Activated CD8-positive, alpha-beta memory T cell treated with anti-CD3 and anti-CD28 coated beads, Interleukin-2, amount 10 ng/mL, durations not matched to agents 7 days and 5 days (primary cell): ENCODE measurements at regions of chr1 and their contacts with region 1.

Region 1: DNA sequence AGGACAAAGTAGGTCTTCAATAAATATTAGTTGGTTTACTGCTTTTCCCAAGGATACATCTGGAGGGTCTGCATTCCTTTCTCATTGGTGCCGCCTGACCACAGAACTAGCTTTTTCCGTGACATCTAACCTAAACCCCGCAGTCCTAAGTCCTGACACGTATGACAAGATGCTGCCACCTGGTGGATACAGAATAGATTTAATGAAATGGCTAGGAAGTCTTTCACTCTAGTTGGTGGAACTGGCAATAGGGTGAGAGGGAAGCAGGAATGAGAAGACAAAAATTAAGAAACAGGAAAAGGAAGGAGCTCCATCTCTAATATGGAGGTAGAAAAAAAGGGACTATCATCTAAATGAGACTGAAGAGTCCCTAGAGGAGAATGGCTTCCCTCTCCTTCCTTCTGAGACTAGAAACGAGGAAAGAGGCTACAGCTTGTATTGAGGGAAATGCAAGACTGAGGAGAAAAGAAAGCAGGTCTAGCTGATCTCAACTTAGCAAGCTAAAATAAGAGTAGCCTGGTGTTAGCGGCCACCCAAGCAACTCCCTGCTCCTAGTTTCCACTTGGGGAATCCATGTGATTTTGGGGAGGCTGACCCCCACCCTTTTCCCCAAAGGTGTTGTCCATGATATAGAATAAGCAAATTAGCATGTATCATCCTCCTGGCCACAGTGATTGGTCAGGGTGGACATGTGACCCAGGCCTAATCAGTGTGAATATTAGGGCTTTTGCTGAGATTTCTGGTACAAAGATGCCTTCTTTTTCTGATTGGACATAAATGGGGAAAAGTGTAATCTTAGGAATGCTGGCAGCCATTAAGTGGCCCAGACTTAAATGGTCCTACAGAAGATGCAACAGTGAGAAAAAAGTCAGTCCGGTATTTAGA is 5.9 kb downstream of the RFX5 start:
- DNase-seq: peak; percentile 72
- ATAC-seq: peak; percentile 87
- H3K4me3 Mint-ChIP-seq: no peak overlapping the region
- H3K27ac Mint-ChIP-seq: peak overlapping the region; percentile 64
- H3K4me1 Mint-ChIP-seq: peaks cover 33% of the 10 kb centered on the region
- H3K27me3 Mint-ChIP-seq: no peaks in the 10 kb centered on the region

Region 2: GRCh38 chr1:151189638-151190445 is 151.3 kb before region 1 on chr1 and contains the start of gene VPS72:
- CTCF ChIA-PET with region 1: no interaction called
- DNase-seq: peak; percentile 94
- ATAC-seq: peak; percentile 98
- H3K4me3 Mint-ChIP-seq: peak within 1 kb of the TSS; percentile 92
- H3K27ac Mint-ChIP-seq: peak within 1 kb of the TSS; percentile 98
- H3K4me1 Mint-ChIP-seq: peaks cover 25% of the 10 kb centered on the region
- H3K27me3 Mint-ChIP-seq: peaks cover 4% of the 10 kb centered on the region
- total RNA-seq, gene VPS72: 78.3 to 86.2 TPM

Region 3: DNA sequence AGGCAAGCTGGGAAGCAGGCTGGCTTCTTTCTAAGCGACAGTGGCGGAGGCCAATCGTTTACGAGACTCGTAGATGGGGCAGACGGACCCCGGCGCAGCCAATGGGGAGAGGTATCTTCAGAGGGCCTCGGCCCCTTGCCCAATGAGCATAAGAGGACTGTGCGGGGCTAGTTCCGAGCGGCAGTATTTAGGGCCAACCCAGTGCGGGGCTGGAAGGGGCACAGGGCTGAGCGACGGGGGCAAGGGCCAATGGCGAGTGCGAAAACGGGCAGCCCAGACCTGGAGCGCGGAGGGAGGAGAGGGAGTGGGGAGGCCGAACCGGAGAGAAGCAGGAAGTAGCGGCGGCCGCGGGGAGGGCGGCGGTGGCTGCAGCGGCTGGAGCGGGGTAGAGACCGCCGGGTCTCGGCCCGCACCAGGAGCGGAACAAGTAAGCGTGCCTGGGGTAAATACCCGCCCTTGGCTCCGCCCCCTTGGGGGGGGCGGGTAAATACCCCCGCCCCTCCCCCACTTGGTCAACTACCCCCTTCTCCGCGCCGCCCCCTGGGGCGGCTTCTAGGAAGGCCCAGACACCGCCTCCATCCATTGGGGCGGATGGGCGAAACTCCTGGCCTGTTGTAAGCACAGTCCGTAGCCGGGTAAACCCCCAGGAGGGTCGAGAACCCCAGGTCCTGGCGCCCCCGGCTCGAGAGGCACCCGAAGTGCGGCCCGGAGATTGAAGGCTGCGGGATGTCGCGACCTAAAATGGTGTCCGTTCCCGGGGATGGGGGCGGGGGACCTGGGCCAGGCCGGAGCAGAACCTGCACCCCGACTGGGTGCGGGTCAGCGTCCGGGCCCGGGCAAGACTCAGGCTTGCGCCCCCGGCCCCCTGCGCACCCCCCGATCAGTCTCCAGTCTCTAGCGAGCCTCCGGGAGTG is 58.9 kb before region 1 on chr1 and contains the start of gene ZNF687:
- CTCF ChIA-PET with region 1: interaction called, 25 read pairs
- DNase-seq: peak; percentile 100
- ATAC-seq: peak; percentile 91
- H3K4me3 Mint-ChIP-seq: peak within 1 kb of the TSS; percentile 99
- H3K27ac Mint-ChIP-seq: peak within 1 kb of the TSS; percentile 99
- H3K4me1 Mint-ChIP-seq: peaks cover 30% of the 10 kb centered on the region
- H3K27me3 Mint-ChIP-seq: no peaks in the 10 kb centered on the region
- total RNA-seq, gene ZNF687: 29.9 to 35.7 TPM

Region 4: DNA sequence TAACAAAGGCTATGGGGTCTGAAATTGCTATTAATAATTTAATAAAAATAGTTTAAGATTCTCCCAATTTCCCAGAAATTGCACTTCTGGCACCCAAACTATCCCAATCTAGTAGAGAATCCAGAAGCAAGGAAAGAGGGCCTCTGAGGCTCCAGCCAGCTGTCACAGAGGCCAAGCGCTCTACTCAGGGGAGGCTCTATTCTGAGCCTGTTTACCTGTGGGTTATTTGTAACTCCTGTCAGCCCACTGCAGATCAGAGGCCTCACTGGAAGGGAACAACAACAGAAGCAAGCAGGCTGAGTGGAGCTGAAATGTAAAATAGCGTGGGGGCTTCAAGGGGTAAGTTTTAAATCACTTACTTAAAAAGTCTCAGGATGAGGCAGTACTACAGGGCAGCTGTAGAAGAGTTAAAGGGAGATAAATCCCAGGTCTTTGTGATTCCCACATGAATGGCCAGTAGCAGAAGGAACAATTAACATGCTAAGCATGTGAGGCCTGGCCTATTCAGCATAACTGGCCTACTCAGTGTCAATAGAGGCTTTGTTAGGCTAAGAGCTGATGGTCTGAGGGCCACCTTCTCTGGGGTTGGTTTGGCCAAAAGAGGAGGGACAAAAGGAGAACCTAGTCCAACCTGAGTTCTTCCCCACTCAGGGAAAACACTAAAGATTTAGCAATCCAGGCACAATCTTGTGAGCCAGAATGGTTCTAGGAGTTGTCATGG is 46.2 kb before region 1 on chr1:
- CTCF ChIA-PET with region 1: interaction called, 122 read pairs
- DNase-seq: no peak
- ATAC-seq: no peak
- H3K4me3 Mint-ChIP-seq: no peak overlapping the region
- H3K27ac Mint-ChIP-seq: no peak overlapping the region
- H3K4me1 Mint-ChIP-seq: no peaks in the 10 kb centered on the region
- H3K27me3 Mint-ChIP-seq: no peaks in the 10 kb centered on the region

Region 5: GRCh38 chr1:151311589-151312331 is 29.4 kb before region 1 on chr1:
- CTCF ChIA-PET with region 1: interaction called, 122 read pairs
- DNase-seq: peak; percentile 86
- ATAC-seq: peak; percentile 100
- H3K4me3 Mint-ChIP-seq: no peak overlapping the region
- H3K27ac Mint-ChIP-seq: peak overlapping the region; percentile 82
- H3K4me1 Mint-ChIP-seq: peaks cover 24% of the 10 kb centered on the region
- H3K27me3 Mint-ChIP-seq: no peaks in the 10 kb centered on the region

Region 6: GRCh38 chr1:151327223-151327902 is 13.7 kb before region 1 on chr1 and contains the start of gene PI4KB:
- CTCF ChIA-PET with region 1: interaction called, 97 read pairs
- DNase-seq: peak; percentile 96
- ATAC-seq: peak; percentile 94
- H3K4me3 Mint-ChIP-seq: peak within 1 kb of the TSS; percentile 91
- H3K27ac Mint-ChIP-seq: peak within 1 kb of the TSS; percentile 93
- H3K4me1 Mint-ChIP-seq: peaks cover 34% of the 10 kb centered on the region
- H3K27me3 Mint-ChIP-seq: no peaks in the 10 kb centered on the region
- total RNA-seq, gene PI4KB: 68.5 to 73.9 TPM

Region 7: DNA sequence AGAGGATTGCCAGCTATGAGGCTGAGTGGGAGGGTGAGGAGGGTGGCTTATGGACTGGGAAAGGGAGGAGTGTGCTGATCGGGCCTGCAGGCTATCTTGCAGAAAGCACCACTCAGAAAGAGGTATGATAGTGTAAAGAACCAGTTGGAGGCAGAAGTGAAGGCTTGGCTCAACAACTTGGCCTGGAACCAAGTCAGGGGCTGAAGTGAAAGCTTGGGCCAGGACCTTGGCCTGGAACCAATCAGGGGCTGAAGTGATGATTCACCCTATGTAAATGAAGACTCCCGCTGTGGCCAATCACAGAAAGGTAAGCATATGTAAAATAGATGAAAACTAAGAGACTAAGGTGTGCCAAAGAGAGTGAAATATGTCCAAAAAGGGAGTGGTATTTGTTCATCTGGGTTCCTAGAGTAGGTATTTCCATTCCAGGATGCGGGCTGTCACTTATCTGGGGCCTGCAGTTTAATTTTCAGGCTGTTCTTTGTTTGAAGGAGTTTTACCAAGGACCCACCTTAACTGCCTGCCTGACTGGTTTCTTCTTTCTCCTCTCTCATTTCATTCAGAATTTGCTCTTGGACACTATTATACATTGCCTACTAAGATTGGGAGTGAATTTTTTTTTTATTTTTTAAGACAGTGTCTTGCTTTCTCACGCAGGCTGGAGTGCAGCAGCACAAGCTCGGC is 11.0 kb after region 1 on chr1:
- CTCF ChIA-PET with region 1: interaction called, 26 read pairs
- DNase-seq: no peak
- ATAC-seq: no peak
- H3K4me3 Mint-ChIP-seq: no peak overlapping the region
- H3K27ac Mint-ChIP-seq: no peak overlapping the region
- H3K4me1 Mint-ChIP-seq: peaks cover 14% of the 10 kb centered on the region
- H3K27me3 Mint-ChIP-seq: peaks cover 3% of the 10 kb centered on the region

Region 8: DNA sequence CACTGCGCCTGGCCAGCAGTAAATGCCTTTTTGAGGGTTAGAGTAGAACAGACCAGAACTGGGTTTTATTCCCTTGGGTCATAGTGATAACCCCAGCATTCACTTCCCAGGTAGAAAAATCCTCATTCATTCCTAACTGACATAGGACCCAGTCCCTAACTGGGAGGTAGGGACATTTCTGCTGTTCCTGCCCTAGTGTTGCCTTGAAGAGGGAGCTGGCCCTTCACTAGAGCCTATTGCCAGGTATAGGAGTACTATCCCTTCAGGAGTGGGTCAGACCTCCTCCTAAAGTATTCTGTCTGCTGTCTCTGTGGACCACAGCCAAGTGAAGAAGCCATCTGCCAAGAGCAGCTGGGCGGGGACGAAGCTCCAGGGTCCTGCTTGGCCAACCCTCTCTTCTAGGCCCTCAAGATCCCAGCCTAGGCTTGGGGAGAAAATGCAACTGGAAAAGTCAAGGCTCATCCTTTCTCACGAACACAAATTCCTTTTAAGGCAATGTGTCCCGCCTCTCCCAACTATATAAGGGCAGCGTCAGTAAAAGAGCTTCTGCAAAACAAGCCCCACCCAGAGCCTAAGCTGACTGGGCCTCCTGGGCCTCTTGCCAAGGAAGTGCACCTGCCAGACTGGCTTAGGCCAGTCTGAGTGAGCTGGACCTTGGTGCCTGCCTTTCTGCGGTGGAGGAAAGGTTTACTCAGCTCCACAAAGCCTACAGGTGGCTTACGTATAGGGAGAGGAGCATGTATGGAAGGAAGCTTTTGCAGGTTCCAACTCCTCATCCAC is 198.3 kb after region 1 on chr1:
- CTCF ChIA-PET with region 1: no interaction called
- DNase-seq: peak; percentile 58
- ATAC-seq: peak; percentile 11
- H3K4me3 Mint-ChIP-seq: peak overlapping the region; percentile 82
- H3K27ac Mint-ChIP-seq: no peak overlapping the region
- H3K4me1 Mint-ChIP-seq: peaks cover 19% of the 10 kb centered on the region
- H3K27me3 Mint-ChIP-seq: peaks cover 10% of the 10 kb centered on the region